Endothelial cell of umbilical vein (primary cell): ENCODE measurements at regions of chr2 and their contacts with region 1.

Region 1: DNA sequence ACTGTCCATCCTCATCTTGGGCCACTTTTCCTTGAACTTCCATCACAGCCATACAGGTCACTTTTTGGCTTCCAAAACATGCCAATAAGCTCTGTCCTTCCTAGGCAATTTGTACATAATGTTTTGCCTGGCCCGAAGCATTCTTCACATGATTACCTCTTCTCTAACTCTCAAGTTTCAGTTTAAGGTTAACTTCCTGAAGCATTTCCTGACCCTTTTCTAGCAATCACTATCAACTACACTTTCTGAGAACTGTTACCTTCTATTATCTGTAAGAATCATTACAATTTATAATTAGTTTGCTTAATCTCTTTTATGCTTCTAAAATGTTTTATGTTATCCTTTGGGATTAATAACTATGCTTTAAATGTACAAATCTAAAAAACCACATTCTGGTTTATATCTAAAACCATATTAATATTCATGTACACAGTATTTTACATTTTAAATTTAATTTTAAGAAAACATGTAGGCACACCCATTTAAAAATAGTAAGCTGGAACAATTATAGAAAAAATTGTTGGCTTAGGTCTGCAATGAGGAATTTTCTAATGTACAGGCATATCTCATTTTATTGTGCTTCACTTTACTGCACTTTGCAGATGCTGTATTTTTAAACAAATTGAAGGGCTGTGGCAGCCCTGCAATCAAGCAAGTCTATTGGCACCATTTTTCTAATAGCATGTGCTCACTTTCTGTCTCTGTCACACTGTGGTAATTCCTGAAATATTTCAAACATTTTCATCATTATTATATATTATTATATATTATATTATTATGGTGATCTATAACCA is 76.4 kb downstream of the C2orf74 start:
- DNase-seq: no peak
- H3K4me3 ChIP-seq: no peak overlapping the region
- H3K27ac ChIP-seq: no peak overlapping the region
- H3K4me1 ChIP-seq: peaks cover 14% of the 10 kb centered on the region
- H3K27me3 ChIP-seq: no peaks in the 10 kb centered on the region
- CTCF ChIP-seq: no peak
- POLR2A ChIP-seq: no peak

Region 2: GRCh38 chr2:61255580-61256437 is 17.4 kb after region 1 on chr2:
- CTCF ChIA-PET with region 1: interaction called, 10 read pairs
- POLR2A ChIA-PET with region 1: interaction called, 5 read pairs
- dilution Hi-C with region 1: no loop called
- intact Hi-C with region 1: no loop called
- DNase-seq: peak; percentile 86
- H3K4me3 ChIP-seq: no peak overlapping the region
- H3K27ac ChIP-seq: peak overlapping the region; percentile 94
- H3K4me1 ChIP-seq: peaks cover 28% of the 10 kb centered on the region
- H3K27me3 ChIP-seq: no peaks in the 10 kb centered on the region
- CTCF ChIP-seq: no peak
- POLR2A ChIP-seq: no peak